ENCODE measurements at regions of chr4 and their contacts with region 1.

Region 1: GRCh38 chr4:76949276-76950051 is at the start of gene SEPTIN11:
- DNase-seq: peak; percentile 92 to 96 (median 95)
- H3K4me3 ChIP-seq: peak within 1 kb of the TSS; percentile 66
- H3K27ac ChIP-seq: peak within 1 kb of the TSS; percentile 85 to 92
- H3K4me1 ChIP-seq: peaks cover 6% of the 10 kb centered on the region
- H3K27me3 ChIP-seq: no peaks in the 10 kb centered on the region
- CTCF ChIP-seq: no peak
- EP300 ChIP-seq: no peak
- POLR2A ChIP-seq: peak; percentile 71
- total RNA-seq, gene SEPTIN11: 29.9 to 86.0 (median 54.1) TPM

Region 2: GRCh38 chr4:77022560-77023179 is 73.2 kb after region 1 on chr4:
- intact Hi-C with region 1: loop called in 1 of 4 experiments (anchors 10 kb)
- DNase-seq: no peak
- H3K4me3 ChIP-seq: no peak overlapping the region
- H3K27ac ChIP-seq: no peak overlapping the region
- H3K4me1 ChIP-seq: peaks cover 15% of the 10 kb centered on the region
- H3K27me3 ChIP-seq: no peaks in the 10 kb centered on the region
- CTCF ChIP-seq: no peak
- EP300 ChIP-seq: no peak
- POLR2A ChIP-seq: no peak

Region 3: GRCh38 chr4:77075869-77076799 is 126.7 kb after region 1 on chr4 and contains the start of gene CCNI:
- intact Hi-C with region 1: loop called in 1 of 4 experiments (anchors 10 kb)
- DNase-seq: peak; percentile 97 to 98 (median 98)
- H3K4me3 ChIP-seq: peak within 1 kb of the TSS; percentile 85
- H3K27ac ChIP-seq: peak within 1 kb of the TSS; percentile 95 to 98
- H3K4me1 ChIP-seq: peaks cover 3% of the 10 kb centered on the region
- H3K27me3 ChIP-seq: no peaks in the 10 kb centered on the region
- CTCF ChIP-seq: peak in 1 of 3 donors; percentile 34
- EP300 ChIP-seq: no peak
- POLR2A ChIP-seq: peak; percentile 69
- total RNA-seq, gene CCNI: 220 to 564 (median 355) TPM

Region 4: GRCh38 chr4:77156533-77156911 is 207.1 kb after region 1 on chr4:
- intact Hi-C with region 1: loop called in 1 of 4 experiments (anchors 5 kb)
- DNase-seq: peak; percentile 93 to 97 (median 93)
- H3K4me3 ChIP-seq: peak overlapping the region; percentile 74
- H3K27ac ChIP-seq: peak overlapping the region; percentile 87 to 95
- H3K4me1 ChIP-seq: no peaks in the 10 kb centered on the region
- H3K27me3 ChIP-seq: no peaks in the 10 kb centered on the region
- CTCF ChIP-seq: no peak
- EP300 ChIP-seq: no peak
- POLR2A ChIP-seq: no peak

Measured in ovary (tissue), 10 donors.